ENCODE measurements at regions of chr4 and their contacts with region 1.

Region 1: GRCh38 chr4:77132652-77133312 is 24.2 kb upstream of the CCNG2 start:
- DNase-seq: no peak
- H3K4me3 ChIP-seq: no peak overlapping the region
- H3K27ac ChIP-seq: no peak overlapping the region
- H3K4me1 ChIP-seq: no peaks in the 10 kb centered on the region
- H3K27me3 ChIP-seq: no peaks in the 10 kb centered on the region
- CTCF ChIP-seq: no peak
- POLR2A ChIP-seq: no peak

Region 2: DNA sequence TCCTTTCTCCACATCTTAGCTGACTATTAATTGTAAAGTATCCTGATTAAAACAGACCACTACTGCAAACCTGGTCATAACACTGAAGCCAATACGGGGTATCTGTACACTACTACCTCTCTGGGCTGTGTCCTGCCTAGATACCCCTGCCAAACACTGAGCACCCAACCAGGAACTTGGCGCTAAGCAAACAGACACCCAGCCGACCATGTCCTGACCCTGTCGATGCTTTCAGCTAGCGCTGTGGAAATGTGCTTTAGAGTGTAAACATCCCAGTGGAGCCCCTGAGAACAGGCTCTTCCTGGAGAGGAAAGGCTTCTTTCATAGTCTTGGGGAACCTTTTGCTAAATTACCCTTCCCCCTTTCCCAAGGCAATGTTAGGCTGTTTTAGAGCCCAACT is 77.2 kb after region 1 on chr4:
- intact Hi-C with region 1: loop called (anchors 2 kb)
- DNase-seq: no peak
- H3K4me3 ChIP-seq: no peak overlapping the region
- H3K27ac ChIP-seq: no peak overlapping the region
- H3K4me1 ChIP-seq: no peaks in the 10 kb centered on the region
- H3K27me3 ChIP-seq: no peaks in the 10 kb centered on the region
- CTCF ChIP-seq: no peak
- POLR2A ChIP-seq: no peak

Measured in breast epithelium (tissue), 4 donors.